A673 (cell line): ENCODE measurements at regions of chr10 and their contacts with region 1.

Region 1: DNA sequence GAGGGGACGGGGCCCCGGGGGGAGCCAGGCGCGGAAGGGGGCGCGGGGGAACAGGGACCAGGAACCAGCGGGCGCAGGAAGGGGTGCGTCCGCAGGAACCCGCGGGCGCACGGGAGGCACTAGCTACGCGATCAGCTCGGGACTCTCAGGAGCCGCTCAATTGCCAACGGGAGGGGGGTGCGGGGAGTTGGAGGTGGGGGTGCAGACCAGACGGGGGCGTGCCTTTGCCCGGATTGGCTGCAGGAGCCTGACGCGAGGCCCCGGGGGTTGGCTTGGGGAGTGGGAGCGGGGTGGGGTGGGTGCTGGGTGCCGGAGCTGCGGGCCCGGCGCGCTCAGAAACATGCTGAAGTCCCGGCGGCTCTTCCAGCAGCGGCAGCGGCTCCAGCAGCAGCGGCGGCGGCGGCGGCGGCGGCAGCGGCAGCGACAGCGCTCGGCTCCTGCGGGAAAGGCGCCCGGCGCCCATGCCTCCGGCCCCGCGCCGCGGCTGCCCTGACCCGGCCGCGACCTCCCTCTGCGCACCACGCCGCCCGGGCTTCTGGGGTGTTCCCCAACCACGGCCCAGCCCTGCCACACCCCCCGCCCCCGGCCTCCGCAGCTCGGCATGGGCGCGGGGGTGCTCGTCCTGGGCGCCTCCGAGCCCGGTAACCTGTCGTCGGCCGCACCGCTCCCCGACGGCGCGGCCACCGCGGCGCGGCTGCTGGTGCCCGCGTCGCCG is at the start of gene ADRB1:
- DNase-seq: peak; percentile 99
- H3K4me3 ChIP-seq: peak within 1 kb of the TSS; percentile 91
- H3K27ac ChIP-seq: peak within 1 kb of the TSS; percentile 96
- H3K4me1 ChIP-seq: peaks cover 17% of the 10 kb centered on the region
- H3K27me3 ChIP-seq: no peaks in the 10 kb centered on the region
- CTCF ChIP-seq: no peak
- total RNA-seq, gene ADRB1: 81.6 and 85.2 TPM in 2 replicates

Region 2: DNA sequence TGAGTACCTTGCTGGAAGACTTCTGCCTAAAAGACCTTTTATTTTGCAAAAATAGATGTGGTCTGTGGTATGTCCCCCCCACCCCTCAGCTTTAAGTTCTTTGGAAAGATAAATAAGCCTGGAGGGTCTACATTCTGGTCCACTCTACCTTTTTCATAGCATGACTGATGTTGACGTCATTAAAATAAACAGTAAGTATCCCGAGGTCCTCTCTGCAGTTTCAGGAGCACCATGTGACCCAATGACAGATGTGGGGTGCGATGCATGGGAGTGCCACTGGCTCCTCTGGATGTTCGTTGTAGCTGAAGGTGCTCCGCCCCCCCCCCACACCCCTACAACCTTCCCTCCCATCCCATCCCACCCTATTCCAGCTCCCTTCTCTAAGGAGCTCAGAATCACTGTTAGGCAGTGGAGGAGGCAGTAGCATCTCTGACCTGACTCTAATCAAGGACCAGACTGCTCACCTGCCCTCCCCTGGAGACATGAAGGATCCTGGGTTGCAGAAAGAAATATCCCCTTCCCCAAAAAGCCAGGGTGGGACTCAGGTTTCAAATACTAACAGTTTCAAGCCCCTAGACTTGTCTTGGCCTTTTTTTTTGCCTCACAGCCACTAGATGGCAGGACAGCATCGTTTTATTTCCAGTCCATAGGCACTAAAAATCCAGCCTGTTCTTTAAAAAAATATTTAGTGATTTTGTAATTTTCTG is 338.9 kb before region 1 on chr10:
- CTCF ChIA-PET with region 1: no interaction called
- POLR2A ChIA-PET with region 1: no interaction called
- intact Hi-C with region 1: loop called (anchors 5 kb)
- DNase-seq: peak; percentile 80
- H3K4me3 ChIP-seq: no peak overlapping the region
- H3K27ac ChIP-seq: peak overlapping the region; percentile 72
- H3K4me1 ChIP-seq: peaks cover 53% of the 10 kb centered on the region
- H3K27me3 ChIP-seq: no peaks in the 10 kb centered on the region
- CTCF ChIP-seq: peak; percentile 83

Region 3: DNA sequence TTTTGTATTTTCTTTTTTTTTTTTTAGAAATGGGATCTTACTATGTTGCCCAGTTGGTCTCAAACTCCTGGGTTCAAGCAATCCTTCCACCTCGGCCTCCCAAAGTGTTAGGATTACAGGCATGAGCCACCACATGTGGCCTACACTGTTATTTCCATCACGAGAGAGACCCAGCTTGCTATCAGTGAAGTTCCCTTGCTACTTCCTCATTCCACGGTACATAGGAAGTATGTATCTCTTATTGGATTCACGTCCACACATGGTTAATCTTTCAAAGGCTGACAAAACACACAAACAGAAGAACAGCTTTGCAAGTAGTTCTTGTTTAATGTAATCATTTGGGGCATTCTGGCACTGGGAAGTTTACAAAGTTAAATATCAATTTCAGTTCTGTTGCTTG is 240.7 kb before region 1 on chr10:
- CTCF ChIA-PET with region 1: no interaction called
- POLR2A ChIA-PET with region 1: interaction called, 10 read pairs
- intact Hi-C with region 1: loop called (anchors 2 kb)
- DNase-seq: no peak
- H3K4me3 ChIP-seq: no peak overlapping the region
- H3K27ac ChIP-seq: no peak overlapping the region
- H3K4me1 ChIP-seq: peaks cover 35% of the 10 kb centered on the region
- H3K27me3 ChIP-seq: no peaks in the 10 kb centered on the region
- CTCF ChIP-seq: no peak

Region 4: GRCh38 chr10:113854011-113854760 is 189.5 kb before region 1 on chr10 and contains the starts of genes DCLRE1A and NHLRC2:
- CTCF ChIA-PET with region 1: no interaction called
- POLR2A ChIA-PET with region 1: no interaction called
- intact Hi-C with region 1: loop called (anchors 1 kb)
- DNase-seq: peak; percentile 90
- H3K4me3 ChIP-seq: peak within 1 kb of the TSS; percentile 76
- H3K27ac ChIP-seq: peak within 1 kb of the TSS; percentile 99
- H3K4me1 ChIP-seq: peaks cover 27% of the 10 kb centered on the region
- H3K27me3 ChIP-seq: no peaks in the 10 kb centered on the region
- CTCF ChIP-seq: no peak
- total RNA-seq, gene DCLRE1A: 62.4 and 75.6 TPM in 2 replicates
- total RNA-seq, gene NHLRC2: 49.7 and 61.9 TPM in 2 replicates

Region 5: GRCh38 chr10:113987805-113988204 is 55.9 kb before region 1 on chr10:
- CTCF ChIA-PET with region 1: interaction called, 4 read pairs
- POLR2A ChIA-PET with region 1: interaction called, 8 read pairs
- intact Hi-C with region 1: loop called (anchors 1 kb)
- DNase-seq: no peak
- H3K4me3 ChIP-seq: no peak overlapping the region
- H3K27ac ChIP-seq: peak overlapping the region; percentile 96
- H3K4me1 ChIP-seq: peaks cover 43% of the 10 kb centered on the region
- H3K27me3 ChIP-seq: no peaks in the 10 kb centered on the region
- CTCF ChIP-seq: no peak

Region 6: GRCh38 chr10:114103284-114103683 is 59.6 kb after region 1 on chr10:
- CTCF ChIA-PET with region 1: no interaction called
- POLR2A ChIA-PET with region 1: interaction called, 10 read pairs
- intact Hi-C with region 1: loop called (anchors 5 kb)
- DNase-seq: peak; percentile 90
- H3K4me3 ChIP-seq: no peak overlapping the region
- H3K27ac ChIP-seq: no peak overlapping the region
- H3K4me1 ChIP-seq: peaks cover 26% of the 10 kb centered on the region
- H3K27me3 ChIP-seq: no peaks in the 10 kb centered on the region
- CTCF ChIP-seq: peak; percentile 64